ENCODE measurements at regions of chr19 and their contacts with region 1.

Region 1: GRCh38 chr19:19366612-19367396 is 38.7 kb upstream of the GATAD2A start:
- DNase-seq: peak; percentile 79 to 85
- H3K4me3 ChIP-seq: no peak overlapping the region
- H3K27ac ChIP-seq: no peak overlapping the region
- H3K4me1 ChIP-seq: peaks cover 0 to 2% (median 0%) of the 10 kb centered on the region in 4 experiments; a peak in 4 of 7 replicates
- H3K27me3 ChIP-seq: 0 out of 7 replicates have a peak, but pooled peaks cover 0 to 4% (median 0%) of the 10 kb centered on the region in 4 experiments
- CTCF ChIP-seq: peak; percentile 95 to 97 (median 96)
- EP300 ChIP-seq: no peak
- POLR2A ChIP-seq: no peak
- RAD21 ChIP-seq: peak; percentile 93 to 94

Region 2: DNA sequence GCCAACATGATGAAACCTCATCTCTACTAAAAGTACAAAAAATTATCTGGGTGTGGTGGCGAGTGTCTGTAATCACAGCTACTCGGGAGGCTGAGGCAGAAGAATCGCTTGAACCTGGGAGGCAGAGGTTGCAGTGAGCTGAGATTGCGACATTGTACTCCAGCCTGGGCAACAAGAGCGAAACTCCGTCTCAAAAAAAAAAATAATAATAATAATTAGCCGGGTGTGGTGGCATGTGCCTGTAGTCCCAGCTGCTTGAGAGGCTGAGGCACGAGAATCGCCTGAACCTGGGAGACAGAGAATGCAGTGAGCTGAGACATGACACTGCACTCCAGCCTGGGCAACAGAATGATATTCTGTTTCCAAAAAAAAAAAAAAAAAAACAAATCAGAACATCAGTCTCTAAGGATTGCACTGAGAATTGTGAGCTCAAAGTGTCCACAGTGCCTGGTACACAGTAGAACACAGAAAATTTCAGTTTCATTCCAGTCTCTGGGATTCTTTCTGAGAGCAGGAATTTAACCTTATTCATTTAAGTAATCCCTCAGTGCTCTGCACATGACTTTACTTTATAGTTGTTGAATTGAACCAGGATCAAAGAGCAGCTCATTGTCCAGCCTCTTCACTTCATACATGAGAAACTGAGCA is 12.6 kb after region 1 on chr19:
- CTCF ChIA-PET with region 1: interaction called, 17 read pairs
- POLR2A ChIA-PET with region 1: interaction called, 5 read pairs
- DNase-seq: no peak
- H3K4me3 ChIP-seq: no peak overlapping the region
- H3K27ac ChIP-seq: no peak overlapping the region
- H3K4me1 ChIP-seq: peaks cover 0 to 6% (median 4%) of the 10 kb centered on the region in 4 experiments
- H3K27me3 ChIP-seq: peaks cover 0 to under 1% (median 0%) of the 10 kb centered on the region in 4 experiments; a peak in 2 of 7 replicates
- CTCF ChIP-seq: no peak
- EP300 ChIP-seq: no peak
- POLR2A ChIP-seq: no peak
- RAD21 ChIP-seq: no peak

Measured in H1 (cell line).